ENCODE measurements at regions of chr2 and their contacts with region 1.

Region 1: DNA sequence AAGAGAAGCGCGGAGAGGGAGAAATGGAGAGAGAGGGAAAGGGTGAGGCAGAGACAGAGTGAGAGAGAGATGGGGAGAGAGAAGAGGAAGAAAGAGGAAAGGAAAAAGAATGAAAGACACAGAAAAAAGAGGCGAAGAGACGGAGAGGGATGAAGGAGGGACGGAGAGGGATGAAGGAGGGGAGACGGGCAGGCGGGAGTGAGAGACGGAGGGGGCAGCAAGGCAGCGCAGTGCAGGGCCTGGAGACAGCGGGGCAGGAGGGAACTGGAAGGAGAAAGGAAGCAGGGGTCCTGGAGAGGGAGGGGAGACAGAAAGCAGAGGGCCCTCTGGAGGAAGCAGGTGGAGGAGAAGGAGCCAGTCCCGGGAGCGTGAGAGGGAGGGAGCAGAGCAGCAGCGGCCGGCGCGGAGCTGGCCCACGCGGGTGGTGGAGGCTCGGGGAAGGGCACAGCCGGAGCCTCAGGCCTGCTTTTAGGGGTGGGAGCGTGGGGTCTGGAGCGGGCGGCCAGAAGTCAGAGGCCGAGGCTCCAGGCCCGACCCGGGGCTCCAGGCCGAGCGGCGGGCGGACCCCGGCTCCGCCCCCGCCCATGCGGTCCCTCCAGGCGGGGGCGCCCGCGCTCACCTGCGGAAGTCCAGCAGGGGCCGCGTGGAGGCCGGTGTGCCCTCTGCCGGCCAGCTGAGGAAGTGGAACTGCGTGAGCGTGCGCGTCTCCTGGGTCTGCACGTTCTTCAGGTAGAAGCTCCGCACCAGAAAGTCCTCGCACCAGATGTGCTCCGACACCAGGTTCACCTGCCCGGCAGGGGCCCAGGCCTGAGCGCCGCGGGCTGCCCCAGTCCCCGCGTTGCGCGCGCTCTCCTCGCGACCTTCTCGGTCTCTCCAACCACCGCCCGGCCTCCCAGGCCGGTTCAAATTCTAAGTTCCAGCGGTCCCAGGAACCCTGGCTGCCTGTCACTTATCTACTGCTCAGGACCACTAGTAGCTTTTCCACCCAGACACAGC is 14.5 kb downstream of the PTPRN start:
- DNase-seq: peak; percentile 91
- ATAC-seq: peak; percentile 89
- H3K4me3 Mint-ChIP-seq: peak overlapping the region; percentile 51
- H3K27ac Mint-ChIP-seq: peak overlapping the region; percentile 66
- H3K4me1 Mint-ChIP-seq: peaks cover 34% of the 10 kb centered on the region
- H3K27me3 Mint-ChIP-seq: peaks cover 6% of the 10 kb centered on the region

Region 2: DNA sequence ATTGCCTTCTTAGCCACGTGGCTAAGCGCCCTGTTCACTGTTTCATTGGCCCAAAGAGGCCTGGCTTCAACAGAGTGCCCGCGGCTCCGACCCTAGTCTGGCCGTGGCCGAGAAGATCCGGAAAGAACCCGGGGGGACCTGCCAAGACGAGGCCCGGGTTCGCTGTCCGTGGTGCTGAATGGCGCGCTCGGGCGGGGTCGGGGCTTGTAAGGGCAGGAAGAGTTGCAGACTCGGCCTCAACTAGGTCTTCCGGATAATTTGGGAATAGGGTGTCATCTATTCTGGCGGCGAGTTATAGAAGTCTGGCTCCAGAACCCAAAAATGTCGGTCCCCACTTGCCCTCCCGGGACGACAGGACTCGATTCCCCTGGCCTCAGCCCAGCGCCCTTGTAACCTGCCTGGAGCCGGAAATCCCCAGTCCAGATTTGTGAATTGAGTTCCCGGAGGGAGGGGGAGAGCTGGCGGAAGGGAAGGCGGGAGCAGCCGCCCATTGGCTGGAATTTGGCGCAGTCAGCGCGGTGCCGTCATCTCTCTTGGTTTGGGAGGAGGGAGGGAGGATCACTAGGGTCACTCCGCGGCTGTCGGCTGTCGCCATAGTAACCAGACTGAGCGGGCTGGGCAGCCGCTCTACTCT is 331.7 kb before region 1 on chr2:
- CTCF ChIA-PET with region 1: no interaction called
- POLR2A ChIA-PET with region 1: no interaction called
- DNase-seq: peak; percentile 81
- ATAC-seq: peak; percentile 48
- H3K4me3 Mint-ChIP-seq: no peak overlapping the region
- H3K27ac Mint-ChIP-seq: no peak overlapping the region
- H3K4me1 Mint-ChIP-seq: peaks cover 7% of the 10 kb centered on the region
- H3K27me3 Mint-ChIP-seq: peaks cover 55% of the 10 kb centered on the region

Region 3: GRCh38 chr2:219160186-219161017 is 134.3 kb before region 1 on chr2 and contains the start of gene NHEJ1:
- CTCF ChIA-PET with region 1: interaction called, 93 read pairs
- POLR2A ChIA-PET with region 1: no interaction called
- DNase-seq: peak; percentile 94
- ATAC-seq: peak; percentile 89
- H3K4me3 Mint-ChIP-seq: peak within 1 kb of the TSS; percentile 88
- H3K27ac Mint-ChIP-seq: peak within 1 kb of the TSS; percentile 95
- H3K4me1 Mint-ChIP-seq: peaks cover 20% of the 10 kb centered on the region
- H3K27me3 Mint-ChIP-seq: no peaks in the 10 kb centered on the region
- total RNA-seq, gene NHEJ1: 19.1 to 23.1 TPM

Region 4: GRCh38 chr2:219206442-219207253 is 88.0 kb before region 1 on chr2 and contains the start of gene ZFAND2B:
- CTCF ChIA-PET with region 1: interaction called, 13 read pairs
- POLR2A ChIA-PET with region 1: no interaction called
- DNase-seq: peak; percentile 95
- ATAC-seq: peak; percentile 98
- H3K4me3 Mint-ChIP-seq: peak within 1 kb of the TSS; percentile 86
- H3K27ac Mint-ChIP-seq: peak within 1 kb of the TSS; percentile 96
- H3K4me1 Mint-ChIP-seq: peaks cover 57% of the 10 kb centered on the region
- H3K27me3 Mint-ChIP-seq: no peaks in the 10 kb centered on the region
- total RNA-seq, gene ZFAND2B: 57.0 to 59.5 TPM

Region 5: DNA sequence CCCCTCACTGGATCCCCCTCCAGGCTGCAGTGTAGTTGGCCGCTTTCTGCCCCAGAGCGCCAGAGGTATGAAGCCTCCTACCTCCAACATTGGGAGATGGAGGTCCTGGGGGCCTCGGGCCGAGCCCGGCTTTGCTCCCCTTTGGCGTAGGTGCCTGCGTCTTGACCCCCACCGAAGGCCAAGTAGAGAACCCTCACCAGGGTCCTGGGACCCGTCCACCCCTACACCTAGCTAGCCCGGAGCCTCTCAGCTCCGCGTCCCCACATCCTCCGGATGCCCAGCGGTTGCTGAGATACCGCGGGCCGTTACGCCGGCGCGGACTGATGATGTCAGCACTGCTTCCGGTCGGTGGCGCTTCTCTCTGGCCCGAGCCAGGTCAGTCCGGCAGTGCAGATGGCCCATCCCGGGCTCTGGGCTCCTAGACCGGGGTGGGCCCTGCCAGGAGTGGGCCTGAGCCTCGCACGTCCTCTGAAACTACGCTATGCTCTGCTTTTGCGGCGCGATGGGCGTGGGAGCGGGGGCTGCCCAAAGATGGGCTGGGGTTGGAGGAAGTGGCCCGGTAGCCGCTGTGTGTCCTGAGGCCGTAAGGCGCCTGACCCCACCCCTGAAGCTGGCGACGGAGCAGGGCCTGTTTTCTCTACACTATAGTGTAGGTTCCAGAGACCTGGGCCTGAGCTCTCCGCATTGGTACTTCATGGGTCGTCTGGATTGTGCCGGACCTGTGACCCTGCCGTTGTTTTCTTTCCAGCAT is 49.3 kb before region 1 on chr2 and contains the starts of genes GLB1L and STK16:
- CTCF ChIA-PET with region 1: interaction called, 29 read pairs
- POLR2A ChIA-PET with region 1: interaction called, 7 read pairs
- DNase-seq: peak; percentile 92
- ATAC-seq: peak; percentile 74
- H3K4me3 Mint-ChIP-seq: peak within 1 kb of the TSS; percentile 99
- H3K27ac Mint-ChIP-seq: peak within 1 kb of the TSS; percentile 100
- H3K4me1 Mint-ChIP-seq: peaks cover 66% of the 10 kb centered on the region
- H3K27me3 Mint-ChIP-seq: no peaks in the 10 kb centered on the region
- total RNA-seq, gene GLB1L: 3.4 to 4.0 TPM
- total RNA-seq, gene STK16: 31.2 to 31.5 TPM

Region 6: DNA sequence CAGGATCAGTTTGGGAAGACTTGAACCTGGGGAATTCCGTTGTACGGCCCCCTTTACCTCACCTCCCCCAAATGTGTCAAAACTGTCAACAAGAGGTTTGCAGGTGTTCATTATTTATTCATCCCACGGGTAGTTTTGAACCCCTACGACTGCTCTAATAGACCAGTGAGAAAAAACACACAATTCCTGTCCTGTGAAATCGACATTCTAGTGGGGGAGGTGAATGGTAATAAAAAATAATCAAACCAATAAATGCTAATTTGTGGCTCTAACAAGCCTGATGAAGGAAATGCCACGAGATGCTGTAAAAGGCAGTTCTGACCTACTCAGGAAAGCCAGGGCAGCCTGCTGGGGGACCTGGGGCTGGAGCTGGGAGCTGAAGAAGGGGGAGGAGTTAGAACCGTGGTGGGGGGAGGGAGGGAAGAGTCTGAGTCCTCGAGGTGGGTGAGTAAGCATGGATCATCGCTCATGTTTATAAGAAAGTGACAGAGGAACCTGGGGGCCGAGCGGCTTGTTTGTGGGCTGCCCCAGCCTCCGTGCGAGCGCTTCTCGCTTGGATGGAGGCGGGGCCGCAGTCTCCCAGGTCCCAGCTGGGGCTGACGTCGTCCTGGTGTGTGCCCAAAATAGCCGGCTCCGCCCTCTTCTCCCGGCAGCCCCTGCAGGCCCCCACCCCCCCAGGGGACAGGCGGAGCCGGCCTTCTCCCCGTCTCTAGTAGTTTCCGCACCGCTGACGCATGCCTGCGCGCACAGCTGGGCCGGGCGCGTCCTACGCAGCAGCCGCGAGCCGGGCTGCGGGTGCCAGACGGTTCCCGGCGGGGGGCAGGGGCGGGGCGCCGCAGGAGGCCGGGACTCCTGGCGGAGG is 15.8 kb before region 1 on chr2 and contains the start of gene DNAJB2:
- CTCF ChIA-PET with region 1: interaction called, 239 read pairs
- POLR2A ChIA-PET with region 1: interaction called, 11 read pairs
- DNase-seq: peak; percentile 99
- ATAC-seq: peak; percentile 92
- H3K4me3 Mint-ChIP-seq: peak within 1 kb of the TSS; percentile 93
- H3K27ac Mint-ChIP-seq: peak within 1 kb of the TSS; percentile 98
- H3K4me1 Mint-ChIP-seq: peaks cover 42% of the 10 kb centered on the region
- H3K27me3 Mint-ChIP-seq: no peaks in the 10 kb centered on the region
- total RNA-seq, gene DNAJB2: 43.5 to 51.1 TPM

Region 7: GRCh38 chr2:219323434-219323833 is 28.8 kb after region 1 on chr2:
- CTCF ChIA-PET with region 1: interaction called, 10 read pairs
- POLR2A ChIA-PET with region 1: no interaction called
- DNase-seq: no peak
- ATAC-seq: no peak
- H3K4me3 Mint-ChIP-seq: no peak overlapping the region
- H3K27ac Mint-ChIP-seq: no peak overlapping the region
- H3K4me1 Mint-ChIP-seq: peaks cover 9% of the 10 kb centered on the region
- H3K27me3 Mint-ChIP-seq: peaks cover 32% of the 10 kb centered on the region

Region 8: GRCh38 chr2:219452838-219453317 is 158.2 kb after region 1 on chr2:
- CTCF ChIA-PET with region 1: no interaction called
- POLR2A ChIA-PET with region 1: no interaction called
- DNase-seq: no peak
- ATAC-seq: no peak
- H3K4me3 Mint-ChIP-seq: no peak overlapping the region
- H3K27ac Mint-ChIP-seq: peak overlapping the region; percentile 65
- H3K4me1 Mint-ChIP-seq: peaks cover 67% of the 10 kb centered on the region
- H3K27me3 Mint-ChIP-seq: peaks cover 18% of the 10 kb centered on the region

Region 9: DNA sequence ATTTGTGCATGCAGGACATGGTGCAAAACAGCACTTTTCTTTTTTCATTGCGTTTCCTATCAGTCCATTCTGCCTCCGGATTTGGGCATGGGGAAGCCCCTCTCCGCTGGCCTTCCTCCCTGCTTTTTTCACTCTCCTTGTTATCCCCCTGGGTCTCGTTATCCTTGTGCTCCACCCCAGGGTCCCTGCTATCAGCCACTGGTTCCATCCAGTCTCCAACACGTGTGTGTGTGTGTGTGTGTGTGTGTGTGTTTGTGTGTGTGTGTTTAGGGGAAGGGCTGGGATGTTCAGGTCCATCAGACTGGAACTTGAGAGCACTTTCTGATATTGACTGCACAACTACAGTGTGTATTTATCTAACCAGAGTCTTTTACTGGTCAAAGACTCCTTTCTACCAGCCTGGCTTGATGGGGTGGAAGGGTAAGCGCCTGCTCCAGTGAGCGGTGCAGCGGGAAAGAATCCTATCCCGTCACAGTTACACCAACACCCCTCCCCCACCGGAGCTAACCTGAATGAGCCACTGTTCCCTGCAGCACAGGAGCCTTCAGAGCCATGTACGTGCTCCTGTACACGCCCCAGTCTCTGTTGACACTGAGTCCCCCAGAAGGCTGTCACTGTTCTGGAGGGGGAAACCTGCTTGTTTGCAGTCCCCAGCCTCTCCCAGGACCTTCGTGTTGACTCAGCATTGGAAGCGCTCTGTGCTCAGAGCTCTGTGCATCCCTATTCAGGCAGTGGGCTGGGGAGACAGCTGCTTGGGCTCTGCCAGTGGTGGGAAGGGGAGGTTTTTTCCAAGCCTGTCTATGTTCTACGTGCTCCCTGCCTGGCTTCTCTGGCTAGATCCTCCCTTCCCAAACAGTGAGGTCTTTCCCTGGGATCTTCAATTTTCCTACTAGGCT is 282.1 kb after region 1 on chr2:
- CTCF ChIA-PET with region 1: no interaction called
- POLR2A ChIA-PET with region 1: no interaction called
- DNase-seq: no peak
- ATAC-seq: no peak
- H3K4me3 Mint-ChIP-seq: no peak overlapping the region
- H3K27ac Mint-ChIP-seq: no peak overlapping the region
- H3K4me1 Mint-ChIP-seq: no peaks in the 10 kb centered on the region
- H3K27me3 Mint-ChIP-seq: peaks cover 25% of the 10 kb centered on the region

Region 10: GRCh38 chr2:219619235-219619634 is 324.6 kb after region 1 on chr2:
- CTCF ChIA-PET with region 1: no interaction called
- POLR2A ChIA-PET with region 1: no interaction called
- DNase-seq: no peak
- ATAC-seq: no peak
- H3K4me3 Mint-ChIP-seq: no peak overlapping the region
- H3K27ac Mint-ChIP-seq: no peak overlapping the region
- H3K4me1 Mint-ChIP-seq: no peaks in the 10 kb centered on the region
- H3K27me3 Mint-ChIP-seq: peaks cover 25% of the 10 kb centered on the region